ENCODE measurements at regions of chr19 and their contacts with region 1.

Region 1: GRCh38 chr19:29878973-29879654 is 62.9 kb upstream of the URI1 start:
- DNase-seq: no peak
- ATAC-seq: peak; percentile 33

Region 2: DNA sequence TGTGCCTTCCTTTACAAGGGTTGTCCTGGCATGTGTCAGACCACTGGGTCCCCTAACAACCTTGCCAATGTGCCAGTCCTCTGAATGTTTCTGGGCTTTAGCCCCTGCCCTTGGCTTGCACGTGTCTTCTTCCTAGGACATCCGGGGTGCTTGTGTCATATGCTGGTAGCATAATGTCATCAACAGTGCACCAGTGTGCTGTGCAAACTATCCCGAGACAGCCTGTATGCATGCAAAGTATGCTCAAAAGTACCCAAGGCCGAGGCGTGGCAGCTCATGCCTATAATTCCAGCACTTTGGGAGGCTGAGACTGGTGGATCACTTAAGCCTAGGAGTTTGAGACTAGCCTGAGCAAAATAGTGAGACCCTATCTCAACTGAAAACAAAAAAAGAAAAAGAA is 143.3 kb before region 1 on chr19:
- intact Hi-C with region 1: loop called (anchors 2 kb)
- DNase-seq: no peak
- ATAC-seq: no peak

Region 3: DNA sequence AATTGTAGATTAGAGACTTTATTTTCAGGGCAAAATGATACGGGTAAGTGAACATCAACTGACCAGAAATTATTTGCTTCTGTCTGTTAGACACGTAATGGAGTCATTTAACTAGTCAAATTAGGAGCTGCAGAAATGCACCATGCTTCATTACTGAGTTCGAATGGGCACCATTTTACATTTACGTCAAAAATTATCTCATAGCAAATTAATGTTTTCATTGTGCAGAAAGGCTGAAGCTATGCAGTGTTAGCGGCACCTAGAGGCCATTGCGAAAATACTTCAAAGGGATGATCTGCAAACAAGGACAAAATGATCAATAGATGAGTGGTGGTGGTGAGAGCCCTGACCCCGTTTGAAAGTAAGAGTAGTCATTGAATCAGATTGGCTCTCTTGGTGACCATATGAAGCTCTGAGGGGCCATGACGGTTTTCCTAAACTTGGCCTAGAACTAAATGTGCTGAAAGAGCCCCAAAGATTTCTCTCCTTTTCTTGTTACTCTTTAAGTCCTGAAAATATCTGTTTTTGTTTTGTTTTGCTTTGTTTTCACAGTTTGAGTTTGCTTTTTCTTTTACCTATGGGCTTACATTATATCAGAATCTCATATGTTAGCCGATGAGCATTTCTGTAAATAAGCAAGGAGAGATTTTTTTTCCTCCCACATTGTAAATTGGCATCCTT is 771.0 kb after region 1 on chr19:
- intact Hi-C with region 1: loop called (anchors 5 kb)
- DNase-seq: no peak
- ATAC-seq: no peak

Measured in Right ventricle myocardium inferior (tissue), 1 donor.